Posterior vena cava (tissue), 2 donors: ENCODE measurements at regions of chr13 and their contacts with region 1.

Region 1: GRCh38 chr13:97030705-97031452 is 36.6 kb upstream of the OXGR1 start:
- DNase-seq: no peak

Region 2: GRCh38 chr13:96844616-96845015 is 186.3 kb before region 1 on chr13:
- intact Hi-C with region 1: no loop called
- DNase-seq: no peak

Region 3: GRCh38 chr13:97359181-97360057 is 328.5 kb after region 1 on chr13:
- intact Hi-C with region 1: loop called in 1 of 2 experiments (anchors 10 kb)
- DNase-seq: no peak